ENCODE measurements at regions of chr22 and their contacts with region 1.

Region 1: GRCh38 chr22:37658133-37659065 is at the start of gene PDXP:
- DNase-seq: peak; percentile 97
- CTCF ChIP-seq: no peak

Region 2: DNA sequence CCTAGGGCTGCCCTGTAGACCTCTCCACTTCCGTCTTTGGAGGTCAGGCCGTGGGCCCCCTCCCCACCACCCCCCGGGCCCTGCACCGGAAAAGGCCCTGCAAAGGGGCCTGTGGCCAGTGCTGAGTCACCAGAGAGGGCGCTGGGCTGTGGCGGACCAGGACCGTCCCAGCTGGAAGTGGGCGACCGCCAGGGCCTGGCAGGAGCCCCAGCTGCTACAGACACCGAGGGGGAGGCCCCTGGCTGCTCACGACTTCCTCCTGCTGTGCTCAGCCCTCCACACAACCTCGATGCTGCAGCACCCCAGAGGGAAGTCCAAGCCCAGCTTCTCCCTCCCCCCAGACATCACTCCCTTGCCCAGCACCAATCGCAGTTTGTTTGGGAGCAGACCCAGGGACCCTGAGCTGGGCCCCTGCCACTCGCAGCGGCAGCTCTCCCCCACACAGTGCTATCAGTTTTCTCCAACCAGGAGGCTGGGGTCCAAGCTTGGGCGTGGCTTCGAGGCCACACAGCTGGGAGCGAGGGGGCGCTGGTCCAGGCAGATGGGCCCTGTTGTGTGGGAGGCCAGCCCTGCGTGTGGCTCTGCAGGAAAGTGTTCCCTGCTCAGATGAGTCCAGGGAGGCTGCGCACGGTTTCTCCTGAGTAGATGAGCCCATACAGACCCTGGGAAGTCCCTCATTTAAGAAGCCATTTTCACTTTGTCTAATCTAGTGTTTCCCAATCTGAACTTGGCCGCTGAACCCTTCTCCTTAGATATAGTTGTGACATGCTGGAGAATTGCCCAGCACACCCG is 24.6 kb before region 1 on chr22:
- CTCF ChIA-PET with region 1: interaction called, 78 read pairs
- POLR2A ChIA-PET with region 1: interaction called, 4 read pairs
- DNase-seq: peak; percentile 92
- CTCF ChIP-seq: peak; percentile 44

Region 3: DNA sequence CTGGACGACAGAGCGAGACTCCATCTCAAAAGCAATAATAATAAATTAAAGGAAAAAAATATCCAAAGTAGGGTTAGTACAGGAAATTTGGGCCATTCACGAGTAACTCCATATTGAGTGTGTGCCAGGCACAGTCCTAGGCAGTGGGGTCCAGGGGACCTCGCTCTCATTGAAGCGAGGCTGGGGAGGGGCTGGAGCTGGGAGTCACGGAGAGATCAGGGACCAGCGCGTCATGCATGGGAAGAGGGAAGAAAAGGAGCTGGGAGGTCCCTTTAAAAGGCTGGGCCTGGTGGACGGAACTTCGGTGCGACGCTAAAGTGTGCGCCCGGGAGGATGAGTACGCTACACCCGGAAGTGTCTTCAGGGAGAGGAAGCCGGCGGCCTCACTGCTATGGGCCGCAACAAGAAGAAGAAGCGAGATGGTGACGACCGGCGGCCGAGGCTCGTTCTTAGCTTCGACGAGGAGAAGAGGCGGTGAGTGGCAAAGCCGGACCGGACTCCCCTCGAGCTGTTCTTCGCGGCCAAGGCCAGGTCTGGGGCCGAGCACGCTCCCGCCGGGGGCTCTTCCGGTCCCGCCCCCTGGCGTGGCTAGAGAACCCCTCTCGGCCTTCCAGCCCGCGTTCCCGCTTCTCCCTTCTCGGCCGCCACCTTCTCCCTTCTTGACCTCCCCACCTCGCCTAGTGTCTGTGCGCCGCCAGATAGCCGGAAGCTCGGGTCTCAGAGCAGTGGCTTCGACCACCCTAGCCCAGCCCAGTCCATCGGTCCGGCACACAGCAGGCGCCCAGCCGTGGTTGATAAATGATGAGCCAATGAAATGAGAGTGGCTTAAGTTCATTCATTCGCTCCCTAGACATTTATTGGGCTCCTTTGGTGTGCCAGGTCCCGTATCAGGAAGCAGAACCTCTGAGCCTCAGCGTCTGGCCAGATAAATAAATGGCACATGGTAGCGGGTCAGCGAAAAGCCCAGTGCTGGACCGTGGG is 27.9 kb after region 1 on chr22 and contains the start of gene NOL12:
- CTCF ChIA-PET with region 1: interaction called, 315 read pairs
- POLR2A ChIA-PET with region 1: interaction called, 3 read pairs
- DNase-seq: peak; percentile 89
- CTCF ChIP-seq: no peak